Dorsolateral prefrontal cortex (tissue), 120 donors: ENCODE measurements at regions of chr7 and their contacts with region 1.

Region 1: GRCh38 chr7:129218514-129219062 is 6.2 kb upstream of the AHCYL2 start:
- DNase-seq: peak; percentile 74 to 92 (median 84)
- H3K4me3 ChIP-seq: peak overlapping the region in 22 of 59 donors; percentile 0 to 55 (median 20)
- H3K27ac ChIP-seq: no peak overlapping the region
- H3K27me3 ChIP-seq: no peaks in the 10 kb centered on the region
- CTCF ChIP-seq: peak; percentile 83 to 98 (median 95)

Region 2: DNA sequence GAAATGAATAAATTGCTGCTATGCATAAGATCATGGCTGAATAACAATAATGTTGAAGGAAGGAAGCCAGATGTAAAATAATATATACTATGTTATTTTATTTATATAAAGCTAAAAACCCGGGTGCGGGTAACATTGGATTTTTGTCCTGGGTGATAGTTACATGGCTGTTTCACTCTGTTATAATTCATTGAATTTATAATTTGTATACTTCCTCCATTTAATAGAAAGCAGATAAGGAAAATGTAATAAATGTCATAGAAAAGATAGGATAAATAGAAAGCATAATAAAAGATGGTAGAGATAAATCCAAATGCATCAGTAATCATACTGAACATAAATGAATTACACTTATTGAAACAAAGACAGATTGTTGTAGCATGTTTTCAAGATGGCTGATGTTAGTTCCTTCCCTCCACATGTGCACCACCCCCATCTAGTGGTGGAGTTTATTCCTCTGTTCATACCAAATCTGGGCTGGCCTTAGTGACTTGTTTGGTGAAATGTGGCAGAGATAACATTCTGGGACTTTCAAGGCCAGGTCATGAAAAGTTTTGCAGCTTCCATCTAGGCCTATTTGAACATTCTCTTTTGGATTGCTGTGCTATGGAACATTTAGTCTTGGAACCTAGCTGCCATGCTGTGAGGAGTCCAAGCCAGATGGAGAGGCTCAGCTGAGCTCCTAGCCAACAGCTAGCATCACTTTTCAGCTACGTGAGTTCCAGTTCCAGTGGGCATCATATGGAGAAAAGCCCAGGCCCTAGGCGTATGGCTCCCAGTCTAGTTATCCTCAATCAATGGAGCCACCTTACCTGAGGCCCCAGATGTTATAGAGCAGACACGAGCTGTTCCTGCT is 53.1 kb after region 1 on chr7:
- intact Hi-C with region 1: loop called in 1 of 2 experiments (anchors 2 kb)
- DNase-seq: peak in 2 of 10 donors; percentile 10 to 17
- H3K4me3 ChIP-seq: peak overlapping the region in 19 of 59 donors; percentile 10 to 49 (median 32)
- H3K27ac ChIP-seq: peak overlapping the region in 4 of 59 donors; percentile 10 to 60 (median 24)
- H3K27me3 ChIP-seq: no peaks in the 10 kb centered on the region
- CTCF ChIP-seq: peak in 55 of 56 donors; percentile 38 to 84 (median 63)